Activated CD4-positive, alpha-beta memory T cell treated with anti-CD3 and anti-CD28 coated beads for 36 hours (primary cell): ENCODE measurements at regions of chr19 and their contacts with region 1.

Region 1: DNA sequence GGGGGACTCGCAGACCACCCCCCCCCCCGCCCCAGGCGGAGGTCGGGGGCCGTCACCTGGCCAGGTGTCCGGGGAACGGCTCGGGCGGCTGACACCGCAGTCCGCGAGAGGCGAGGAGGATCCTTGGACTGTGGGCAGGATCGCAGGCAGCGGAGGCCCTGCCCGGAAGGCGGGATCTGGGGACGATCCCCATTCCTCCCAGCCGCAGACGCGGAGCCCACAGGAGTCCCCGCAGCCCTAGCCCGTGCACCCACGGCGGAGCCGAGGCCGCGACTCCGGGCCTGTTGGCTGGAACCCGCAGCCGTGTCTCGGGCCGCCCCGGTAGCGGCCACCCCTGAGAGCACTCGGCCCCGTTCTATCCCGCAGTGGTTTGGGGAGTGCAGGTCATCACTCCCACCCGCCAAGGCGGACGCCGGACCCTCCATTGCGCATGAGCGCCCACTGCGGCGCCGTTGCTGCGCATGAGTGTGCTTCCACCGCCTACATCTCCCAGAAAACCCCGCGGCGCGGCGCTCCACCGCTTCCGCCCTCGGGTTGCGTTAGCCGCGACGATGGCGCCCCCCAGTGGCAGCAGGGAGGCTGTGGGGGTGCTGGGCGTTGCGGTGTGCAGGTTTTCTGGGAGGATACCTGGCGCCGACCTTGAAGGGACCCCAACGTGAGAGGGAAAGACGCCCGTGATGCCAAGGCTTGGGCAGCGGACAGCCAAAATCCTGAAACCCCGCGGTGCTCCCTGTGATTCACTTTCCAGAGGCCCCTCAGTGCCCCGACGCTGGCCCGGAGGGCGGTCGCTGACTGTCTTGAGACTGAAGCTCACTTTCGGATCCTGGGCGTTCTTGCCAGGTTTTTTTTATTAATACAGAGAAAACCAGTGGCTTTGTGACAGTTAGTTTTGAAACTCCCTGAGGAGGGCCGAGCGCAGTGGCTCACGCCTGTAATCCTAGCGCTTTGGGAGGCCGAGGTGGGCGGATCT is 4.4 kb upstream of the ZNF329 start:
- DNase-seq: peak; percentile 98
- H3K4me3 Mint-ChIP-seq: peak overlapping the region; percentile 79
- H3K27ac Mint-ChIP-seq: peak overlapping the region; percentile 23
- H3K4me1 Mint-ChIP-seq: peaks cover 11% of the 10 kb centered on the region
- H3K27me3 Mint-ChIP-seq: no peaks in the 10 kb centered on the region

Region 2: GRCh38 chr19:57103573-57104277 is 1051.2 kb before region 1 on chr19:
- CTCF ChIA-PET with region 1: interaction called, 3 read pairs
- POLR2A ChIA-PET with region 1: no interaction called
- intact Hi-C with region 1: loop called (anchors 1 kb)
- DNase-seq: peak; percentile 67
- H3K4me3 Mint-ChIP-seq: no peak overlapping the region
- H3K27ac Mint-ChIP-seq: no peak overlapping the region
- H3K4me1 Mint-ChIP-seq: no peaks in the 10 kb centered on the region
- H3K27me3 Mint-ChIP-seq: peaks cover 2% of the 10 kb centered on the region

Region 3: GRCh38 chr19:57578487-57579205 is 576.3 kb before region 1 on chr19 and contains the start of gene ZNF416:
- CTCF ChIA-PET with region 1: no interaction called
- POLR2A ChIA-PET with region 1: no interaction called
- intact Hi-C with region 1: loop called (anchors 5 kb)
- DNase-seq: peak; percentile 97
- H3K4me3 Mint-ChIP-seq: peak within 1 kb of the TSS; percentile 76
- H3K27ac Mint-ChIP-seq: peak within 1 kb of the TSS; percentile 75
- H3K4me1 Mint-ChIP-seq: peaks cover 18% of the 10 kb centered on the region
- H3K27me3 Mint-ChIP-seq: no peaks in the 10 kb centered on the region
- total RNA-seq, gene ZNF416: 2.2 to 2.4 TPM

Region 4: DNA sequence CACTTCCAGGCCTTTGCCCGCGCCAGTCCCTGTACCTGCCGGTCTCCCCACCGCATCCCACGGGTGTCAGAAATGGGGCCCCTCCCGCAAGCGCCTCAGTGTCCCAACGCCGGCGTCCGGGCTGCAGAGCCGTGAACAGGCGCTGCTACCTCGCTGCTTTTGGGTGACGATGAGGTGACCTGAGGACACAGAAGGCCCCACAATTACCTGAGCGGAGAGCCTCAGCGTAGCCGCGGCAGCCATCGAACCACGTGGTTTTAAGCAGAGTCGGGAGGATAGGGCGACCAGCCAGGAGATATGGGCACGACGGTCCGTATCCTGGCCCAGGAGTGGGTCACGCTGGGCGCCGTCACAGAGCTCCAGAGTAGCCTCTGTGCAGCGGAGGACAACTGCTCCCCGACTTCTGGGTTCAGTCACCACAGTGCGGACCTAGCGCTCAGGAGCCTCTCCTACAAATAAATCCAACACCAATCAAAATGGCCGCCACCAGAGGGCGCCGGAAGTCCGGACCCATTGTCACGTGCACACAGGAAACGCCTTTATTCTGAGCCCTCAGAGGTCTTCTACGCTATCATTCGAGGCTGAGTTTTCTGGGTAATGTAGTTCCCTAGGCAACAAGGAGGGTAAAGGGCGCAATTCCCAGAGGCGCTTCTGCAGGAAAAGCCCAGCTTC is 266.3 kb before region 1 on chr19 and contains the start of gene ZNF814:
- CTCF ChIA-PET with region 1: interaction called, 3 read pairs
- POLR2A ChIA-PET with region 1: no interaction called
- intact Hi-C with region 1: loop called (anchors 10 kb)
- DNase-seq: peak; percentile 88
- H3K4me3 Mint-ChIP-seq: peak within 1 kb of the TSS; percentile 86
- H3K27ac Mint-ChIP-seq: peak within 1 kb of the TSS; percentile 61
- H3K4me1 Mint-ChIP-seq: peaks cover 19% of the 10 kb centered on the region
- H3K27me3 Mint-ChIP-seq: no peaks in the 10 kb centered on the region
- total RNA-seq, gene ZNF814: 10.4 to 12.4 TPM

Region 5: DNA sequence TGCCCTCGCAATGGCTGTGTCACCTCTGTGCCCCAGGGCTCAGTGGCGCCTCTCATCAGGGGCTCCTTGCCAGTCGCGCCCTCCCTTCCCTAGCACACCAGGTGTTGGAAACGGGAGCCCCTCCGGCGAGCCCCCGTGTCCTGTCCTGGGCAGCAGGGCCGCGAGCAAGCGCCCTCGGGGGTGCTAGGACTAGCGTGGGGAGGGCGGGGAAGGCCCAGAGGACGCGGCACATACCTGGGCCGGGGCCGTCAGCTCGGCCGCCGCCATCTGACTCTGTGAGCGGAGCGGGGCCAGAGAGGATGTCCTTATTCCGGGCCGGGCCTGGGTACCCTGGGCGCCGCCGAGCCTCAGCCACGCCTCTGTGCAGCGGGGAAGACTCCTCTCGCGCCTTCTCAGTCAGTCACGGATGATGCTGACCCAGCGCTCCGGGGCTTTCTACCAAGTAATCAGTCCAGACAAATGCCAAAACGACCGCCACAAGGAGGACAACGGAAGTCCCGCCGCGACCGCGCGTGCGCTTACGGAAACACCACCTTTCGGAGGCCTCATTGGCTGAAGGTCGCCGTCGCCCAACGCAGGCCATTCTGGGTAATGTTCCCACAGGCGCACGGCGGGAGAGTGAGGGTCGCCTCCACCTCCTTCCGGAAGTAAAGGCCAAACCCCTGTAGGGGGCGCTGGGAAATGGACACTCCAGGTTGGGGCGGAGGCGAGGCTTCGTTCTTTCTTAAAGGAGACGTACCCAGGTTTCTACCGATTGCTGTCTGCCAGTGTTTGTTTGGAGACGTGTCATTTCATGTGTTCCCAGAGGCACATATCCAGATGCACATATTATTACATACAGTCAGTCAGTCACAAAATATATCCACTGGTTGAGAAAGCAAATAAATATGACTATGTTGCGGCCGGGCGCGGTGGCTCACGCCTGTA is 207.5 kb before region 1 on chr19 and contains the start of gene ZNF256:
- CTCF ChIA-PET with region 1: no interaction called
- POLR2A ChIA-PET with region 1: no interaction called
- intact Hi-C with region 1: loop called (anchors 1 kb)
- DNase-seq: peak; percentile 94
- H3K4me3 Mint-ChIP-seq: peak within 1 kb of the TSS; percentile 94
- H3K27ac Mint-ChIP-seq: peak within 1 kb of the TSS; percentile 82
- H3K4me1 Mint-ChIP-seq: peaks cover 16% of the 10 kb centered on the region
- H3K27me3 Mint-ChIP-seq: no peaks in the 10 kb centered on the region
- total RNA-seq, gene ZNF256: 3.9 TPM

Region 6: GRCh38 chr19:58097781-58098681 is 56.9 kb before region 1 on chr19 and contains the start of gene ZSCAN18:
- CTCF ChIA-PET with region 1: no interaction called
- POLR2A ChIA-PET with region 1: no interaction called
- intact Hi-C with region 1: loop called (anchors 2 kb)
- DNase-seq: peak; percentile 96
- H3K4me3 Mint-ChIP-seq: peak within 1 kb of the TSS; percentile 77
- H3K27ac Mint-ChIP-seq: peak within 1 kb of the TSS; percentile 92
- H3K4me1 Mint-ChIP-seq: peaks cover 11% of the 10 kb centered on the region
- H3K27me3 Mint-ChIP-seq: no peaks in the 10 kb centered on the region
- total RNA-seq, gene ZSCAN18: 13.8 to 15.7 TPM